Naive thymus-derived CD4-positive, alpha-beta T cell (primary cell): ENCODE measurements at regions of chr9 and their contacts with region 1.

Region 1: DNA sequence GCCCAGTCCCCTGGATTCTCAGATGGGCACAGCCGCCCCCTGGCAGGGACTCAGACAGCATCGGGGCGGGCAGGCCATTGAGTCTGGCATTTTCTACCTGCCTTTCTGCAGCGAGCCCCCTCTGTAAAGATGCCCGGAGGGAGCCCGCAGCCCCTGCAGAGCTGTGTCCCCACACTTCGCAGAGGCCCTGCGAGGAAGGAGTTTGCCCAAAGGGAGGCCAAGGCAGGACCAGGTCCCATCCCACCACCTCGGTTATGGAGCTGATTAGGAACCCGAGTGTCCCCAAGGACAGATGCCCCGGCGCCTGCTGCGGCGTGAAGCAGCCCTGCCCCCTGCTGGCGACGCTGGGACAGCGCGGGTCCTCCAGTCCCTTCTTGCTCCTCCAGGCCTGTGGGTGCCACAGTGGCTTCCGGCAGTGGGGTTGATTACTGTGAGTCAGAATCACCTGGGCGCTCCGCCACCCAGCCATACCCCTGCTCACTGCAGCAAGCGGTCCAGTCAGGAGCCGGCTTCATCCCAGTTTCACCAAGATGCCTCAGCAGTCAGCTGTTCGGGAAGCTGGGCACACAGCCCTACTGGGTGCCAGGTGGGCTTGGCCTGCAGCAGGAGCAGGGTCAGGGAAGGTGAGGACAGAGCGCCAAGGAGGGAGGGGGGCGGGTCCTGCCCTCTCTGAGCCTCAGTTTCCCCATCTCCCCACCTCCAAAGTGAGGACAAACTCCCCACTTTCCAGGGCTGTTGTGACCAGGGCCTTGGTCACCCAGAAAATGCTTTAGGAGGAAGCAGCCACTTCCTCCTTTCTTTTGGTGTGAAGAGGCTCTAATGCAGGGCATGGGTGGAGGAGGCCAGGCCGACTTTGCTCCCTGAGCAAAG is 117.1 kb downstream of the RXRA start:
- DNase-seq: peak; percentile 72 to 86 (median 83)
- ATAC-seq: peak; percentile 98
- H3K4me3 ChIP-seq: peak overlapping the region; percentile 27
- H3K4me3 Mint-ChIP-seq: peak overlapping the region in 3 of 10 donors; percentile 21 to 47 (median 25)
- H3K27ac ChIP-seq: no peak overlapping the region
- H3K27ac Mint-ChIP-seq: peak overlapping the region in 5 of 9 donors; percentile 45 to 77 (median 46)
- H3K4me1 ChIP-seq: peaks cover 11 to 19% of the 10 kb centered on the region in 2 donors
- H3K4me1 Mint-ChIP-seq: peaks cover 8 to 20% (median 17%) of the 10 kb centered on the region in 7 donors
- H3K27me3 ChIP-seq: no peaks in the 10 kb centered on the region
- H3K27me3 Mint-ChIP-seq: peaks cover 0 to 9% (median 3%) of the 10 kb centered on the region in 5 donors

Region 2: GRCh38 chr9:134171316-134172197 is 271.8 kb before region 1 on chr9:
- CTCF ChIA-PET with region 1: interaction called, 12 read pairs
- POLR2A ChIA-PET with region 1: interaction called, 8 read pairs
- intact Hi-C with region 1: loop called (anchors 1 kb)
- DNase-seq: no peak
- ATAC-seq: no peak
- H3K4me3 ChIP-seq: no peak overlapping the region
- H3K4me3 Mint-ChIP-seq: no peak overlapping the region
- H3K27ac ChIP-seq: no peak overlapping the region
- H3K27ac Mint-ChIP-seq: peak overlapping the region in 2 of 9 donors; percentile 33 to 59
- H3K4me1 ChIP-seq: no peaks in the 10 kb centered on the region
- H3K4me1 Mint-ChIP-seq: peaks cover 0 to 2% (median 0%) of the 10 kb centered on the region in 7 donors
- H3K27me3 ChIP-seq: no peaks in the 10 kb centered on the region
- H3K27me3 Mint-ChIP-seq: no peaks in the 10 kb centered on the region

Region 3: GRCh38 chr9:134325817-134326723 is 117.3 kb before region 1 on chr9 and contains the start of gene RXRA:
- CTCF ChIA-PET with region 1: interaction called, 3 read pairs
- POLR2A ChIA-PET with region 1: no interaction called
- intact Hi-C with region 1: loop called in 1 of 2 experiments (anchors 1 kb)
- DNase-seq: peak; percentile 42 to 73 (median 61)
- ATAC-seq: peak; percentile 85
- H3K4me3 ChIP-seq: peak within 1 kb of the TSS; percentile 73
- H3K4me3 Mint-ChIP-seq: peak within 1 kb of the TSS; percentile 54 to 86 (median 75)
- H3K27ac ChIP-seq: peak within 1 kb of the TSS; percentile 62
- H3K27ac Mint-ChIP-seq: peak within 1 kb of the TSS in 5 of 9 donors; percentile 16 to 68 (median 47)
- H3K4me1 ChIP-seq: peaks cover 4 to 10% of the 10 kb centered on the region in 2 donors
- H3K4me1 Mint-ChIP-seq: peaks cover 0 to 17% (median 11%) of the 10 kb centered on the region in 7 donors
- H3K27me3 ChIP-seq: no peaks in the 10 kb centered on the region
- H3K27me3 Mint-ChIP-seq: peaks cover 0 to 52% (median 0%) of the 10 kb centered on the region in 5 donors
- total RNA-seq, gene RXRA: 5.9 to 59.5 (median 8.6) TPM

Region 4: GRCh38 chr9:134344068-134344799 is 99.2 kb before region 1 on chr9:
- CTCF ChIA-PET with region 1: no interaction called
- POLR2A ChIA-PET with region 1: no interaction called
- intact Hi-C with region 1: loop called in 1 of 2 experiments (anchors 5 kb)
- DNase-seq: no peak
- ATAC-seq: peak; percentile 61
- H3K4me3 ChIP-seq: no peak overlapping the region
- H3K4me3 Mint-ChIP-seq: peak overlapping the region in 4 of 10 donors; percentile 34 to 38 (median 35)
- H3K27ac ChIP-seq: no peak overlapping the region
- H3K27ac Mint-ChIP-seq: peak overlapping the region in 1 of 9 donors; percentile 52
- H3K4me1 ChIP-seq: peaks cover 3 to 8% of the 10 kb centered on the region in 2 donors
- H3K4me1 Mint-ChIP-seq: peaks cover 0 to 32% (median 25%) of the 10 kb centered on the region in 7 donors
- H3K27me3 ChIP-seq: no peaks in the 10 kb centered on the region
- H3K27me3 Mint-ChIP-seq: no peaks in the 10 kb centered on the region

Region 5: GRCh38 chr9:134391314-134392231 is 51.8 kb before region 1 on chr9:
- CTCF ChIA-PET with region 1: interaction called, 5 read pairs
- POLR2A ChIA-PET with region 1: no interaction called
- intact Hi-C with region 1: loop called (anchors 2 to 5 kb)
- DNase-seq: peak in 8 of 9 donors; percentile 43 to 85 (median 48)
- ATAC-seq: peak; percentile 72
- H3K4me3 ChIP-seq: peak overlapping the region; percentile 40
- H3K4me3 Mint-ChIP-seq: peak overlapping the region; percentile 61 to 80 (median 74)
- H3K27ac ChIP-seq: peak overlapping the region; percentile 79
- H3K27ac Mint-ChIP-seq: peak overlapping the region; percentile 75 to 96 (median 92)
- H3K4me1 ChIP-seq: peaks cover 50 to 51% of the 10 kb centered on the region in 2 donors
- H3K4me1 Mint-ChIP-seq: peaks cover 31 to 62% (median 48%) of the 10 kb centered on the region in 7 donors
- H3K27me3 ChIP-seq: no peaks in the 10 kb centered on the region
- H3K27me3 Mint-ChIP-seq: peaks cover 0 to 9% (median 0%) of the 10 kb centered on the region in 5 donors

Region 6: GRCh38 chr9:134407123-134407808 is 36.1 kb before region 1 on chr9:
- CTCF ChIA-PET with region 1: no interaction called
- POLR2A ChIA-PET with region 1: no interaction called
- intact Hi-C with region 1: loop called in 1 of 2 experiments (anchors 1 kb)
- DNase-seq: peak; percentile 52 to 77 (median 69)
- ATAC-seq: peak; percentile 79
- H3K4me3 ChIP-seq: peak overlapping the region; percentile 51
- H3K4me3 Mint-ChIP-seq: peak overlapping the region; percentile 69 to 87 (median 79)
- H3K27ac ChIP-seq: no peak overlapping the region
- H3K27ac Mint-ChIP-seq: peak overlapping the region in 3 of 9 donors; percentile 74 to 81 (median 75)
- H3K4me1 ChIP-seq: peaks cover 40 to 49% of the 10 kb centered on the region in 2 donors
- H3K4me1 Mint-ChIP-seq: peaks cover 30 to 46% (median 41%) of the 10 kb centered on the region in 7 donors
- H3K27me3 ChIP-seq: no peaks in the 10 kb centered on the region
- H3K27me3 Mint-ChIP-seq: peaks cover 0 to 10% (median 0%) of the 10 kb centered on the region in 5 donors

Region 7: DNA sequence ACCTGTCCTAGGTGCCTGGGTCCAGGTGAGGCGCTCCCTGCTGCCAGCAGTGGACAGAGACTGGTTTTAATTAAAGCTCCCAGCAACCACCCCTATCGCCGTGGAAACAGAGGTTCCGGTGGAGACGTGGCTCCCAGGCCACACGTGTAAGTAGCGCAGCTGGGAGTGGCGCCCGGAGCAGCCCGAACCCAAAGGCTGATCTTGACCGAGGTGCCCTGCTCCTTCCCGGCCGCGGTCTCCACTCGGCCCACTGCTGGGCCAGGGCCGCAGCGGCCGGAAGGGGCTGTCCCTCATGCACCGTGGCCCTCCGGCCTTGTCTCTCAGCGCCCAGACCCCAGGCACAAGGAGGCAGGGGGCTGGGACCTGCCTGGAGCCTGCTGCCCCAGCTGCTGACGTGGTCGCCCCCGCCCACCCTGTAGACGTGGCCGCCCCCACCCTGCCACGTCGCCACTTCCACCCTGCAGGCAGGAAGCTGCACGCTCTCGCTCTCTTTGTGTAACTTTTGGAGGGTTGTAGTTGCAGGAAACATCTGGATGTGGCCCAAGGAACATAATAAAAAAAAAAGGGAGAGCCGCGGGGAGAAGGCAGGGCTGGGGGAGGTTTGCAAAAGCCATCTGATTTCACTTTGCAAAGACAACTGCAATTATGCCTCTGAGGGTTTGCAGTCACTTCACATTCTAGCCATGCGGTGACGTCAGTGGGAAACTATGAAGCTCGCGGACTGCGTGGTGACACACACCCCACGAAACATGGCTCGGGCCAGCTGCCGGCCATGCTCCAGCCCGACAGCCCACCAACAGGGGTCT is 12.7 kb after region 1 on chr9:
- CTCF ChIA-PET with region 1: interaction called, 3 read pairs
- POLR2A ChIA-PET with region 1: interaction called, 5 read pairs
- intact Hi-C with region 1: loop called in 1 of 2 experiments (anchors 2 kb)
- DNase-seq: peak; percentile 57 to 87 (median 80)
- ATAC-seq: peak; percentile 91
- H3K4me3 ChIP-seq: peak overlapping the region; percentile 63
- H3K4me3 Mint-ChIP-seq: peak overlapping the region; percentile 66 to 96 (median 84)
- H3K27ac ChIP-seq: peak overlapping the region; percentile 84
- H3K27ac Mint-ChIP-seq: peak overlapping the region; percentile 79 to 99 (median 95)
- H3K4me1 ChIP-seq: peaks cover 10 to 20% of the 10 kb centered on the region in 2 donors
- H3K4me1 Mint-ChIP-seq: peaks cover 0 to 19% (median 11%) of the 10 kb centered on the region in 7 donors
- H3K27me3 ChIP-seq: no peaks in the 10 kb centered on the region
- H3K27me3 Mint-ChIP-seq: no peaks in the 10 kb centered on the region

Region 8: DNA sequence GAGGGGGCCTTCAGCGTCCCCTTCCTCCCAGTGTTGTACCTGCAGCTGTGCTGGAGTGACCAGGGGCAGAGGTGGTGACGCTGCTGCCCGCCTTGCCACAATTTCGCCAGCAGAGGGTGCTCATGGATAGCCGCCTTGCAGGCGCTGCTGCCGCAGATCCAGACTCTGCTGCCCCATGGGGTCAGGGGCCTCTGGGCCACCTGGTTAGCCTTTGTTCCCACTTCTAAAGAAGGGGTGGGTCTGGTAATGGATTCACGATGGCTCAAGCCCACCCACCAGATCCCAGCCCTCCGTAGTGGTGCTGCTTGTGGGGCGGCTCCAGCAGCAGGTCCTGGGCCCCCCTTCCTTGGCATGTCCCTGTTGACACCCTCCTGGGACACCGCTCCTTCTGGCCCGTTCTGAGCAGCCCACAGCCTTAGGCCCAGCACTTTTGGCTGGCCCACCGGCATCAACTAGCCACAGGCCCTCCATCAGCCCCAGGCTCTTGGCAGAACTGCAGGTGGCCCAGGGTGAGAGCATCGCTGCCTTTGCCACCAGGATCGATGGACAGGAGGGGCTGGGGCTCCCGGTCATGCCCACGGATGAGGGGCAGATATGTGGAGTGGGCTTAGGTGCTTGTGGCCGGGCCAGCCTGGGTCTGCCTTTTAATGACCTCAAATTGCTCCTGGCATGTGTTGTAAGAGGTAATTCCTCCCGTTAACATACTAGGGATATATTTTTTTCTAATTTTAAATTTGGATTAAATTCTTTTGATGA is 255.4 kb after region 1 on chr9:
- CTCF ChIA-PET with region 1: no interaction called
- POLR2A ChIA-PET with region 1: no interaction called
- intact Hi-C with region 1: no loop called
- DNase-seq: peak in 6 of 9 donors; percentile 13 to 54 (median 26)
- ATAC-seq: peak; percentile 52
- H3K4me3 ChIP-seq: no peak overlapping the region
- H3K4me3 Mint-ChIP-seq: no peak overlapping the region
- H3K27ac ChIP-seq: no peak overlapping the region
- H3K27ac Mint-ChIP-seq: no peak overlapping the region
- H3K4me1 ChIP-seq: no peaks in the 10 kb centered on the region
- H3K4me1 Mint-ChIP-seq: peaks cover 0 to 3% (median 0%) of the 10 kb centered on the region in 7 donors
- H3K27me3 ChIP-seq: no peaks in the 10 kb centered on the region
- H3K27me3 Mint-ChIP-seq: no peaks in the 10 kb centered on the region